PC-9 (cell line): ENCODE measurements at regions of chr18 and their contacts with region 1.

Region 1: GRCh38 chr18:57881818-57882413 is 78.8 kb upstream of the ATP8B1 start:
- DNase-seq: peak; percentile 55 to 63
- H3K4me3 ChIP-seq: no peak overlapping the region
- H3K27ac ChIP-seq: no peak overlapping the region
- H3K4me1 ChIP-seq: peaks cover 5% of the 10 kb centered on the region; the same call in 1 of the 2 replicates
- H3K27me3 ChIP-seq: no peaks in the 10 kb centered on the region
- CTCF ChIP-seq: peak; percentile 93

Region 2: GRCh38 chr18:57630002-57630753 is 251.7 kb before region 1 on chr18:
- CTCF ChIA-PET with region 1: no interaction called
- POLR2A ChIA-PET with region 1: interaction called, 3 read pairs
- intact Hi-C with region 1: loop called (anchors 1 kb)
- DNase-seq: peak; percentile 82 to 88
- H3K4me3 ChIP-seq: peak overlapping the region; percentile 60
- H3K27ac ChIP-seq: peak overlapping the region; percentile 57
- H3K4me1 ChIP-seq: peaks cover 10% of the 10 kb centered on the region
- H3K27me3 ChIP-seq: no peaks in the 10 kb centered on the region
- CTCF ChIP-seq: peak; percentile 70; the same call in 1 of the 2 replicates

Region 3: GRCh38 chr18:57666818-57667497 is 215.0 kb before region 1 on chr18:
- CTCF ChIA-PET with region 1: interaction called, 15 read pairs
- POLR2A ChIA-PET with region 1: no interaction called
- intact Hi-C with region 1: no loop called
- DNase-seq: no peak
- H3K4me3 ChIP-seq: no peak overlapping the region
- H3K27ac ChIP-seq: no peak overlapping the region
- H3K4me1 ChIP-seq: no peaks in the 10 kb centered on the region
- H3K27me3 ChIP-seq: no peaks in the 10 kb centered on the region
- CTCF ChIP-seq: no peak

Region 4: DNA sequence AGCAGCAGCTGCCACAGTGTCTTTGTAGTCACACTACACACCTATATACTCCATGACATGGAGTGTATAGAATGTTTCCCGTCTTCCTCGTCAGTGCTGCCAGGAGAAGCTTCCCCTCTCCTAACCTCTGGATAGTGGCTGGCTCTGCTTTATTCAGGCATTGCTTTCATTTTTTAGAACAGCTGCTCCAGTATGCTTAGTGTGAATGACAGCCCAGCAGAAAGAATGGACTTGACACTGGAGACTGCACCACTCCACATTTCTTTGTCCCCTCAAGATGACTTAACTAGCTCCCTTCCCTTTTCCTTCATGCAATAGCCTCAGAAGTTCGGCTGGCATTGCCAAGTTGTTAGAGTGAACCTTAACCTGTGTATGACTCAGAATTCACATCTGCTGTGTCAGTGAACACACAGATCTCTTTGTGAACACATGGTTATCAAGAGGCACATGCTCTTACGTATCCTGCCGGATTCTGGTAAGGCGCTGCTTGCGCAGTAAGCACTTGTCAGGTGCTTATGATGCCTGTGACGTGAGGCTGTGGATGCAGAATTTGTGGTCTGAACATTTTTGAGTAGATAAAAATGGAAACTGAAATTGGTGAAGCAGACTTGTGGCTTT is 236.0 kb after region 1 on chr18:
- CTCF ChIA-PET with region 1: interaction called, 5 read pairs
- POLR2A ChIA-PET with region 1: no interaction called
- intact Hi-C with region 1: loop called (anchors 1 kb)
- DNase-seq: peak; percentile 25 to 93
- H3K4me3 ChIP-seq: no peak overlapping the region
- H3K27ac ChIP-seq: peak overlapping the region; percentile 75
- H3K4me1 ChIP-seq: peaks cover 40% of the 10 kb centered on the region
- H3K27me3 ChIP-seq: no peaks in the 10 kb centered on the region
- CTCF ChIP-seq: no peak

Region 5: DNA sequence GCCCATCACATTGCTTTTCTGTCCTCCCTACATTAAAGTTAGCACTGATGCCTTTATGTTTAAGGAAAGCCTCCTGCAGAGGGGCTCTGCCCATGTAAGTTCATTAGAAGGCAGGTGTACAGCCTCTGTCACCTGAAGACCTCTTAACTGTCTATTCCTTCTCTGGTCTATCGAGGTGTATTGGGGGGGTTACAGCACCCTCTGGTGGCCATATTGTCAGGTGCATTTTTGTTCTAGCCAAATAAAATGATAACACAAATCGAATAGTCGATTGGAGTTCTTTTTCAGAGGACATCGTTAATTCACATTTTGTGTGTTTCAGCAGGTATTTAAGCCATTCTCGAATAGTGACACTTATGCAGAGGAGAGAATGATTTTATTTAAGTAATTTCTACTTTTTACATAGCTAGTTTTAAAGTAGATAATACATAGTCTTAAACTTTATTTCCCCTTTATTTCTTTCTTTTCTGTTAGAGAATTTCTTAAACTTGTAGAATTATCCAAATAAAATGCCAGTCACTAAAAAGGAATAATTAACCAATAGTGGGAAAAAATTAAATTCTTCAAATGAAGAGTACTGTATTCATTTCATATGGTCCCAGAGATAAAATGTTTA is 298.9 kb after region 1 on chr18:
- CTCF ChIA-PET with region 1: interaction called, 16 read pairs
- POLR2A ChIA-PET with region 1: no interaction called
- intact Hi-C with region 1: no loop called
- DNase-seq: peak; percentile 43 to 52
- H3K4me3 ChIP-seq: no peak overlapping the region
- H3K27ac ChIP-seq: no peak overlapping the region
- H3K4me1 ChIP-seq: peaks cover 60% of the 10 kb centered on the region
- H3K27me3 ChIP-seq: no peaks in the 10 kb centered on the region
- CTCF ChIP-seq: peak; percentile 94

Region 6: DNA sequence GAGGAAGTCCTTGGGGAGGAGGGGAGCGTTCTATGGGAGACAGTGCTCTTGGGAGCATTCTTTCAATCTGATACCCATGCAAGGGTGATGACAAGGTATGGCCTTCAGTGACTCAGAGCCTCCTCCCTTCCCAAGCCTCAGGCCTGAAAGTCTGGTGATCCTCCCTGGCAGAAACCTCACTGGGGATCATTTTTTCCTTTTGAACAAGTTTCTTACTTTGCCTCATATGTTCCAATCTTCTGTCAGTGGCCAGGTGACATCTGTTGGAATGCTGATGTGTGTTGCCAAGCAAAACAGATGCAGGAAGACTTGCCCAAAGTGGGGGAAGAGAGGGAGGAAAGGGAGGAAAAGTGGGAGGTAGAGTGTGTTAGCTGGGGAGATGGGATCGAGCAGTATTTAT is 386.9 kb after region 1 on chr18:
- CTCF ChIA-PET with region 1: interaction called, 16 read pairs
- POLR2A ChIA-PET with region 1: no interaction called
- intact Hi-C with region 1: no loop called
- DNase-seq: peak; percentile 71 to 97
- H3K4me3 ChIP-seq: peak overlapping the region; percentile 47; the same call in 1 of the 2 replicates
- H3K27ac ChIP-seq: peak overlapping the region; percentile 95
- H3K4me1 ChIP-seq: peaks cover 76% of the 10 kb centered on the region
- H3K27me3 ChIP-seq: no peaks in the 10 kb centered on the region
- CTCF ChIP-seq: no peak

Region 7: DNA sequence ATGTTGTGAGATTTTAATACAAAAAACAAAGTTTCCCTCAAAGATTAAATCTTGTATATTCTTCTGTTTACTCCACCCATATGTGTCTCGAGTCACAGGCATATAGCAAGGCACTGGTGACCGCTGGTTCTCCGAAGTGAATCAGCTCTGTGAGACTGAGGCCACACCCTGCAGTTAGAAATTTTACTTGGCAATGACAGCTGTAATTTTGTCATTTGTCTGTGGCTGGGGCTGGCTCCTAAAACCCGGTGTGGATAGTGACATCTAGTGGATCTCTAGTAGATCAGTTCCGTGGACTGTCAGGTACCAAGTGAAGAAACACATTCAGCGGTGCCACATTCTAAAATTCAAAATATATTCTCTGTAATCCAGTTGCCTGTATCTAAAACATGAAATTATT is 440.1 kb after region 1 on chr18:
- CTCF ChIA-PET with region 1: no interaction called
- POLR2A ChIA-PET with region 1: no interaction called
- intact Hi-C with region 1: loop called (anchors 5 kb)
- DNase-seq: peak; percentile 61 to 86
- H3K4me3 ChIP-seq: no peak overlapping the region
- H3K27ac ChIP-seq: peak overlapping the region; percentile 58
- H3K4me1 ChIP-seq: peaks cover 12% of the 10 kb centered on the region
- H3K27me3 ChIP-seq: no peaks in the 10 kb centered on the region
- CTCF ChIP-seq: peak; percentile 68